IMR-90 (cell line): ENCODE measurements at regions of chr19 and their contacts with region 1.

Region 1: GRCh38 chr19:1672038-1672768 is 19.8 kb upstream of the TCF3 start:
- DNase-seq: peak; percentile 30
- ATAC-seq: peak; percentile 83
- H3K4me3 ChIP-seq: peak overlapping the region; percentile 34; the same call in 1 of the 2 replicates
- H3K27ac ChIP-seq: no peak overlapping the region
- H3K4me1 ChIP-seq: peaks cover 5% of the 10 kb centered on the region
- H3K27me3 ChIP-seq: peaks cover 62% of the 10 kb centered on the region
- CTCF ChIP-seq: peak; percentile 75
- POLR2A ChIP-seq: no peak
- RAD21 ChIP-seq: peak; percentile 86

Region 2: DNA sequence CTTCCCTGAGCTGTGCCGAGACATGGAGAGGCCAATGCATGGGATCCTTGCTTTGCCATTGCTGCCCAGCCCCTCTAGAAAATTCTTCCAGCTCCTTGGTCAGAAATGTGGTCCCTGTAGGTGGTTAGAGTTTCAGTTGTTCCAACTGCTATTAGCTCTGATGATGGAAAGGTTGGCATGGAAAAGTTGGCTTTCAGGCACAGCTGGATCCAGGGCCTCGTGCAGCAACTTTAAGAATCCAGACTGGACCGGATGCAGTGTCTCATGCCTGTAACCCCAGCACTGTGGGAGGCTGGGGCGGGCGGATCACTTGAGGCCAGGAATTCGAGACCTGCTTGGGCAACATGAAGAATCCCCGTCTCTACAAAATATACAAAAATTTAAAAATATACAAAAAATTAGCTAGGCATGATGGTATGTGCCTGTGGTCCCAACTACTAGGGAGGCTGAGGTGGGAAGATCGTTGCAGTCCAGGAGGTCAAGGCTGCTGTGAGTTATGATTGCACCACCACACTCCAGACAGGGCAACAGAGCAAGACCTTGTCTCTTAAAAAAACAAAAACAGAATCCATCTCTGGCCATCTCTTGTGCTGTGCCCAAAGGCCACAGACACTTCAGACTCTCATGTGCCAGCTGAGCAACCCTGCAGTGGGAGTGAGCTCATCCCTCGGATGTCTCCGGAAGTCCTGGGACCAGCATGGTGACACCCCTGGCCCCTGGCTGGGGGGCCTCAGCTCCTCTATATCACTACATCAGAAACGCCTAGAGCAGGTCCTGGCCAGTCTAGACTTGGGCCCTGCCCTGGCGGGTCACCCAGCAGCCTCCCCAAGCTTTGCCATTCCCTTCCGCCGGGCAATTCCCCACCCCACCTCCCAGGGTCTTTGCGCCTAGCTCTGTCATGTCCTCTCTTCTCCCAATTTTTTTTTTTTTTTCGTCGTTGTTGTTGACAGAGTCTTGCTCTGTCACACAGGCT is 120.8 kb before region 1 on chr19:
- CTCF ChIA-PET with region 1: interaction called, 3 read pairs
- POLR2A ChIA-PET with region 1: no interaction called
- dilution Hi-C with region 1: no loop called
- in situ Hi-C with region 1: no loop called
- intact Hi-C with region 1: loop called (anchors 1 kb)
- DNase-seq: no peak
- ATAC-seq: no peak; the same call in 1 of the 2 replicates
- H3K4me3 ChIP-seq: no peak overlapping the region
- H3K27ac ChIP-seq: no peak overlapping the region
- H3K4me1 ChIP-seq: no peaks in the 10 kb centered on the region
- H3K27me3 ChIP-seq: no peaks in the 10 kb centered on the region
- CTCF ChIP-seq: no peak
- POLR2A ChIP-seq: no peak
- RAD21 ChIP-seq: no peak

Region 3: DNA sequence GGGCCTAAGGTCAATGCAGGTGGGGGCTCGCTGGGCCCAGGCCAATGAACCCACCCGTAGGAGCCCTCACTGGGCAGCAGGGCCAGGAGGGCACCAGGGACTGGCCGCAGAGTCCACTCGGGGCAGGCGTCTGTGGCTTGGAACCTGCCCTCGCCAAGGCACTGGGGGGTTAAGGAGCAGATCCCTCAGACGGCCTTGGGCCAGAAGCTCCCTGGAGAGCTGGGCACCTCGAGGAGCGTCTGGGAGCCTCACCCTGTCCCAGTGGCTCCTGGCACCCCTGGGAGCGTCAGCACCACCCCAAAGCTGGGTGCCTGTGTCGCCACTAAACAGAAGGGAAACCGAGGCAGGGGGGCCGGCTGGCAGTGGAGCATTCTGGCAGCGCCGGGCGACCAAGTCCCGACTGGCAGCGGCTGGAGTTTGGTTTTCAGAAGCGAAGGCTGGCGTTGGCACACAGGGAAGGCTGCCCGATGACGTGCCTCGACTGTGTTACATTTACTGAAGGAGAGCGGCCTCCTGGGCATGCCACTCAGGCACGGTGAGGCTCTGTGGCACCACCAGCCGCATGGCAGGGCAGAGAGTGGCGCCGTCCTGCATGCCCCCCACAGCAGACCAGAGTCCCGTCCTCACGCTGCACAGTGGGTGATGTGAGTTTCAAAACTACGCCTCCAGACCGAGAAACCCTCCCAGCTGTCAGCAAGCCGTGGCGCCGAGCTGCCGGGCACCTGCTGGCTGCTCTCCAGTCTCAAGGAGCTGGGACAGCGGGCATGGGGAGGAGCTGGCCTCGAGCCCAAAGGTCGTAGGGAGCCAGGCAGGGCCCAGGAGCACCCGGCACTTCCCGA is 94.9 kb before region 1 on chr19:
- CTCF ChIA-PET with region 1: no interaction called
- POLR2A ChIA-PET with region 1: no interaction called
- dilution Hi-C with region 1: no loop called
- in situ Hi-C with region 1: no loop called
- intact Hi-C with region 1: no loop called
- DNase-seq: no peak
- ATAC-seq: no peak
- H3K4me3 ChIP-seq: no peak overlapping the region
- H3K27ac ChIP-seq: no peak overlapping the region
- H3K4me1 ChIP-seq: no peaks in the 10 kb centered on the region
- H3K27me3 ChIP-seq: no peaks in the 10 kb centered on the region
- CTCF ChIP-seq: no peak
- POLR2A ChIP-seq: no peak
- RAD21 ChIP-seq: no peak

Region 4: DNA sequence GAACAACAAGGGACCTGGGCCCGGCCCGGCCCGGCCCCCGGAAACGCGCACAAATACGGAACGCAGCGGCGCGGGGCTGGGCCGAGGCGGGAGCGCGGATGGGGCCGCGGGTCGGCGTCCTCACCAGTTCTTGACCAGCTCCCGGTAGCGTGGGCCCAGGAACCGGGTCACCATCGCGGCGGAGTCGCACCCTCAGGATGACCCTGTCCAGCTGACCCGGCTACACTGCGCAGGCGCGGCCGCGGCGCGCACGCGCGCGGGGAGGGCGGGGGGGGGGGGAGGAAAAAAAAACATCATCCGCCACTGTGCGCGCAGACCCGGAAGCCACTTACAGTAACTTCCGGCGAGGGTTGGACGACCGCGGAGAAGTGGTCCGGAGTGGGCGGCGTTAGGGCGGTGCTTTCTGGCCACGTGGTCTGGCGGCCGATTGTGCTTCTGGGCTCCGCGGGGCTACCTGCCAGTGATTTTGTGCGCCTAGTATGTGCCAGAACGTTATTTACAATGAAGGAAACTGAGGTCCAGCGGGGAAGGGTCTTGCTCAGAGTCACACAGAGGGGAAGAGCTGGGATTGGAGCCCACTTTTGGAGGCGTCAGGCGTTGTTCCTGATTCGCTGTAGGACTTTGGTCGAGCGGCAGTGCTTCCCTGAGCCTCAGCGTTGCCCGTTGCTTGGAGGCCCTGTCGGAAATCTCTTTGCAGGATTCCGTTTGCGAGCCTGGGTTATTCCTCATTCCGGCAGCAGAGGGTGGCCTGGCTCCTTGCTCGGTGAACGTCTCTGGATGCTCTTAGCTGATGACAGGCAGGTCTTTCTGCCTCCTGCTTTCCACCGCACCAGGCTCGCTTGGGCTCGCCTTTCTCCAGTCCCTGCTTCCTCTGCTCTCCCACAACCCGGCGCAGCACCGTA is 66.7 kb before region 1 on chr19 and contains the start of gene UQCR11:
- CTCF ChIA-PET with region 1: no interaction called
- POLR2A ChIA-PET with region 1: no interaction called
- dilution Hi-C with region 1: no loop called
- in situ Hi-C with region 1: no loop called
- intact Hi-C with region 1: loop called (anchors 2 kb)
- DNase-seq: peak; percentile 96
- ATAC-seq: peak; percentile 90
- H3K4me3 ChIP-seq: peak within 1 kb of the TSS; percentile 82
- H3K27ac ChIP-seq: peak within 1 kb of the TSS; percentile 89
- H3K4me1 ChIP-seq: peaks cover 2% of the 10 kb centered on the region; the same call in 1 of the 2 replicates
- H3K27me3 ChIP-seq: no peaks in the 10 kb centered on the region
- CTCF ChIP-seq: peak; percentile 67
- POLR2A ChIP-seq: no peak
- RAD21 ChIP-seq: peak; percentile 73
- total RNA-seq, gene UQCR11: 22.8 and 29.2 TPM in 2 replicates

Region 5: DNA sequence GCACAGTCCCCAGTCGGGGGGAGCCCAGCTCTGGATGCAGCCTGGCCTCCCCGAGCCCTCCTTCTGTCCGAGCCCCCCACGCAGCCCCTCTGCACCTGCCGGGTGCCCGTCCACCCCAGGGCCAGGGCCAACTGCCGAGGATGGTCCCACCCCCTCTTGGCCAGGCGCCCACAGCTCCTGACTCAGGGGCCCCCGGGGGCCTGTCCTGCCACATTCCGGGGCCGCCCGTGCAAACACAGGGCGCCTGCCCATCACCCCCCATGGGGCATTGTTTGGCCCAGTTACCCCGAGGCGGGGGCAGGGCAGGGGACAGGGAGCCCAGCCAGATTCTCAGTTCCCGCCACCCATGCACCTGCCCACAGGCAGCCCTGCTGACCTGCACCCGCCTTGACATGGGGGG is 14.5 kb before region 1 on chr19:
- CTCF ChIA-PET with region 1: no interaction called
- POLR2A ChIA-PET with region 1: no interaction called
- dilution Hi-C with region 1: no loop called
- in situ Hi-C with region 1: no loop called
- intact Hi-C with region 1: loop called (anchors 1 kb)
- DNase-seq: no peak
- ATAC-seq: no peak
- H3K4me3 ChIP-seq: no peak overlapping the region
- H3K27ac ChIP-seq: no peak overlapping the region
- H3K4me1 ChIP-seq: no peaks in the 10 kb centered on the region
- H3K27me3 ChIP-seq: peaks cover 3% of the 10 kb centered on the region; the same call in 1 of the 2 replicates
- CTCF ChIP-seq: no peak
- POLR2A ChIP-seq: no peak
- RAD21 ChIP-seq: no peak

Region 6: GRCh38 chr19:1683869-1684572 is 11.8 kb after region 1 on chr19:
- CTCF ChIA-PET with region 1: interaction called, 10 read pairs
- POLR2A ChIA-PET with region 1: no interaction called
- dilution Hi-C with region 1: no loop called
- in situ Hi-C with region 1: no loop called
- intact Hi-C with region 1: no loop called
- DNase-seq: no peak
- ATAC-seq: no peak
- H3K4me3 ChIP-seq: no peak overlapping the region
- H3K27ac ChIP-seq: no peak overlapping the region
- H3K4me1 ChIP-seq: no peaks in the 10 kb centered on the region
- H3K27me3 ChIP-seq: peaks cover 35% of the 10 kb centered on the region
- CTCF ChIP-seq: no peak
- POLR2A ChIP-seq: no peak
- RAD21 ChIP-seq: no peak

Region 7: DNA sequence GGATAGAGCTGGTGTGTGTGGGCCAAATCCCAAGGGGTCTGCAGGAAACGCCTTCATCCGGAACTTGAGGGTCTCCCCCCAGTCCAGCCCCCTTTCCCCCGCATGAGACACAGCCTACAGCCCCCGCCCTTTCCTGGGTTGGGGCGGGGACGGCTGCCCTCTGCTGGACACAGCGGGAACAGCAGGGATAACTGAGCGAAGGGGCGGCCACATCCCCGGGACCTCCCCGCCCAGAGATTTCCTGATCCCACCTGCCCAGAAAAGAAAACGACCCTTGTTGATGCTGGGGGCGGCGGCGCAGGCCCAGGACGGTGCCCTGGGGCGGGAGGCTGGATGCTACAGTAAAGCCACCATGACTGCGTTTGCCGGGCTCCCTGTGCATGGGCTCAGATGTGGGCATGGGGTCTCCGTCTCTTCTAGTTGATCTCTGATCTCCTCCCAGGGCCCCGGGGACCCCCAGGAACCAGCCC is 95.3 kb after region 1 on chr19:
- CTCF ChIA-PET with region 1: interaction called, 3 read pairs
- POLR2A ChIA-PET with region 1: no interaction called
- dilution Hi-C with region 1: no loop called
- in situ Hi-C with region 1: loop called (anchors 5 kb)
- intact Hi-C with region 1: loop called (anchors 1 kb)
- DNase-seq: no peak
- ATAC-seq: peak; percentile 92
- H3K4me3 ChIP-seq: no peak overlapping the region
- H3K27ac ChIP-seq: no peak overlapping the region
- H3K4me1 ChIP-seq: no peaks in the 10 kb centered on the region
- H3K27me3 ChIP-seq: peaks cover 64% of the 10 kb centered on the region
- CTCF ChIP-seq: peak; percentile 84
- POLR2A ChIP-seq: no peak
- RAD21 ChIP-seq: peak; percentile 77

Region 8: GRCh38 chr19:1794424-1795172 is 122.4 kb after region 1 on chr19:
- CTCF ChIA-PET with region 1: interaction called, 5 read pairs
- POLR2A ChIA-PET with region 1: no interaction called
- dilution Hi-C with region 1: no loop called
- in situ Hi-C with region 1: no loop called
- intact Hi-C with region 1: loop called (anchors 1 kb)
- DNase-seq: no peak
- ATAC-seq: no peak
- H3K4me3 ChIP-seq: no peak overlapping the region
- H3K27ac ChIP-seq: no peak overlapping the region
- H3K4me1 ChIP-seq: no peaks in the 10 kb centered on the region
- H3K27me3 ChIP-seq: no peaks in the 10 kb centered on the region; the same call in 1 of the 2 replicates
- CTCF ChIP-seq: no peak
- POLR2A ChIP-seq: no peak
- RAD21 ChIP-seq: no peak